ENCODE measurements at regions of chr4 and their contacts with region 1.

Region 1: DNA sequence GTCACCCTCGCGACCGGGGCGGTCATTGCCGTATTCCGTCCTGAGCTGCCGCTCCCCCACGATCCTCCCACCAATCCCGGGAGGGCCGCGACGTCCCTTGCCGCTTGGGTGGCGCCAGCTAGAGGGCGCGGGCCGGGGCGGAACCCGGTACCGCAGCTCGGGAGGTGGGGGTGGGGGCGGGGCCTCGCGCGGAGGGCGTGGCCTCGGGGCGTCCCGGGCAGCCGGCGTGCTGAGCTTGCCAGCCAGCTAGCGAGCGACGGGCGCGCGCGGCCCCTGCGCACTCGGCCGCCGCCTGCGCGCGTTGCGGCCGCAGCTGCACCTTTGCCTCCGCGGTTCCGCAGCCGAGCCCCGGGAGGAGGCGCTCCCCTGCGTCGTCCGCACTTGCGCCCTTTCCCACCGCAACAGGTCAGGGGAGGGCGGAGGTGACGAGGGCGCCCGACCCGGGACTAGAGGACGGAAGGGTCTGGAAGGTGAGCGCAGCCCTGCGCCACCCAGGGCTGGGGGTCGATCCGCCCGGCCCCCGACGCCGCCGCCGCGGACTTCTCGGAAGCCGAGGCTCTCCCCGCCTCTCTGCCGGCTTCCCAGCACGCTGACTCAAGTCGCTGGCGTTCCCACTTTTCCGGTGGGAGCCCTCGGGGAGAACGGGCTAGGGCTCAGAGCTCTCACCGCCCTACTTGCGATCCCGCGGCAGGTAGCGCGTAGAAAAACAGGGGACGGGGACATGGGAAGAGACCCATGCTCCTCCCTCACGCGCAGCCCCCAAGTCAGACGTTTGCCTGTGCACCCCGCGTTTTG is at the start of gene AFF1:
- DNase-seq: peak; percentile 82
- ATAC-seq: peak; percentile 85
- H3K4me3 ChIP-seq: peak within 1 kb of the TSS; percentile 59 to 84
- H3K27ac ChIP-seq: peak within 1 kb of the TSS; percentile 91
- H3K4me1 ChIP-seq: peaks cover 16 to 35% of the 10 kb centered on the region in 2 experiments
- H3K27me3 ChIP-seq: no peaks in the 10 kb centered on the region
- CTCF ChIP-seq: peak in 2 of 3 experiments; percentile 13 to 38; a peak in 2 of 6 replicates
- POLR2A ChIP-seq: peak; percentile 49
- RAD21 ChIP-seq: no peak
- total RNA-seq, gene AFF1: 43.1 TPM

Region 2: GRCh38 chr4:86778175-86778574 is 156.8 kb before region 1 on chr4:
- CTCF ChIA-PET with region 1: no interaction called
- POLR2A ChIA-PET with region 1: no interaction called
- RAD21 ChIA-PET with region 1: no interaction called
- intact Hi-C with region 1: no loop called
- DNase-seq: no peak
- ATAC-seq: no peak
- H3K4me3 ChIP-seq: no peak overlapping the region
- H3K27ac ChIP-seq: no peak overlapping the region
- H3K4me1 ChIP-seq: no peaks in the 10 kb centered on the region
- H3K27me3 ChIP-seq: no peaks in the 10 kb centered on the region
- CTCF ChIP-seq: no peak
- POLR2A ChIP-seq: no peak
- RAD21 ChIP-seq: no peak

Region 3: GRCh38 chr4:86977621-86978184 is 42.7 kb after region 1 on chr4:
- CTCF ChIA-PET with region 1: no interaction called
- POLR2A ChIA-PET with region 1: no interaction called
- RAD21 ChIA-PET with region 1: no interaction called
- intact Hi-C with region 1: loop called (anchors 5 kb)
- DNase-seq: peak; percentile 73
- ATAC-seq: peak; percentile 93
- H3K4me3 ChIP-seq: peak overlapping the region in 1 of 2 experiments; percentile 31; a peak in 3 of 4 replicates
- H3K27ac ChIP-seq: peak overlapping the region; percentile 55
- H3K4me1 ChIP-seq: peaks cover 23 to 28% of the 10 kb centered on the region in 2 experiments
- H3K27me3 ChIP-seq: no peaks in the 10 kb centered on the region
- CTCF ChIP-seq: no peak
- POLR2A ChIP-seq: no peak
- RAD21 ChIP-seq: no peak; the same call in 1 of the 2 replicates

Region 4: GRCh38 chr4:87006676-87007527 is 71.9 kb after region 1 on chr4:
- CTCF ChIA-PET with region 1: no interaction called
- POLR2A ChIA-PET with region 1: interaction called, 17 read pairs
- RAD21 ChIA-PET with region 1: no interaction called
- intact Hi-C with region 1: loop called (anchors 1 kb)
- DNase-seq: peak; percentile 86
- ATAC-seq: peak; percentile 91
- H3K4me3 ChIP-seq: peak overlapping the region; percentile 63 to 94
- H3K27ac ChIP-seq: peak overlapping the region; percentile 90
- H3K4me1 ChIP-seq: peaks cover 23 to 40% of the 10 kb centered on the region in 2 experiments
- H3K27me3 ChIP-seq: no peaks in the 10 kb centered on the region
- CTCF ChIP-seq: peak in 1 of 3 experiments; percentile 36; a peak in 3 of 6 replicates
- POLR2A ChIP-seq: peak; percentile 98
- RAD21 ChIP-seq: peak; percentile 37

Measured in HCT116 (cell line).